ENCODE measurements at regions of chr16 and their contacts with region 1.

Region 1: GRCh38 chr16:54286090-54286993 is at the start of gene IRX3:
- DNase-seq: peak; percentile 89 to 92
- ATAC-seq: peak; percentile 76 to 84 (median 80)
- H3K4me3 ChIP-seq: peak within 1 kb of the TSS; percentile 61 to 93 (median 73)
- H3K27ac ChIP-seq: peak within 1 kb of the TSS; percentile 84 to 98 (median 94)
- H3K4me1 ChIP-seq: peaks cover 0 to 54% (median 23%) of the 10 kb centered on the region in 9 donors
- H3K27me3 ChIP-seq: peaks cover 0 to 100% (median 48%) of the 10 kb centered on the region in 7 donors
- CTCF ChIP-seq: no peak
- total RNA-seq, gene IRX3: 24.7 to 85.7 (median 69.7) TPM

Region 2: GRCh38 chr16:53892155-53892554 is 394.2 kb before region 1 on chr16:
- intact Hi-C with region 1: loop called in 3 of 10 experiments (anchors 5 to 10 kb)
- DNase-seq: peak in 1 of 2 donors; percentile 55
- ATAC-seq: peak in 7 of 8 donors; percentile 58 to 84 (median 69)
- H3K4me3 ChIP-seq: no peak overlapping the region
- H3K27ac ChIP-seq: no peak overlapping the region
- H3K4me1 ChIP-seq: peaks cover 4 to 43% (median 31%) of the 10 kb centered on the region in 9 donors
- H3K27me3 ChIP-seq: no peaks in the 10 kb centered on the region
- CTCF ChIP-seq: peak; percentile 50 to 84 (median 75)

Region 3: DNA sequence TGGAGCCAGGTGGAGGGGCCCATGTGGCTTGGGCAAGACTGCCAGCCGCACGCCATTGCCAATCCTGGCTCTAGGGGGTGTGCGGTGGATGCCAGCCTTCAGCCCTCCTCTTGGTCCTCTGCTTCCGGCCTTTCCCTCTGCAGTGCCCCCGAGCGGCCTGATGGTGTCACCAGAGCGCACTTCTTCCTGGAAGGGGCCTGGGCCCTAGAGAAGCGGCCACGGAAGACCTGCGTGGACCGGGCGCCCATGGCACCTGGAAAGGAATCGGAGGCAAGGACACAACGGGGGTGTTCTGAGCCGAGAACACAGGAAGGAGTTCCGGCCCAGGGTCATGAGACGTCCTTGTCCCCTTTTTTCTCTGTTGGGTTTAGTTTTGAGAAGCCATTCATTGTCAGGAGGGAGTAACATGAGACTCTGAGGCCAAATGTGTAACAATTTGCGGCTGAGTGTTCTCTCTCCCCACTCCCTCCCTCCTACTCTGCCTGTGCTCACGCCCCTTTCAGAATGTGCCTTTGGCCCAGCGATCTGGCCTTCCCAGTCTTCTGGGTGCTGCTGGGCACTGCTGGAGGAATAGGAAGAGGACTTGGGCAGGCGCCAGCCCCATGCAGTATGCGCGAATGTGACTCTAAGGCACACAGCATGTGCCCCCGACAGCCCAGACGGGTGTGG is 92.5 kb before region 1 on chr16:
- intact Hi-C with region 1: loop called in 6 of 10 experiments (anchors 1 to 10 kb)
- DNase-seq: peak; percentile 82 to 85
- ATAC-seq: peak; percentile 82 to 94 (median 90)
- H3K4me3 ChIP-seq: peak overlapping the region in 8 of 10 donors; percentile 10 to 47 (median 34)
- H3K27ac ChIP-seq: peak overlapping the region; percentile 76 to 91 (median 86)
- H3K4me1 ChIP-seq: peaks cover 0 to 25% (median 13%) of the 10 kb centered on the region in 9 donors
- H3K27me3 ChIP-seq: peaks cover 0 to 2% (median 0%) of the 10 kb centered on the region in 7 donors
- CTCF ChIP-seq: peak; percentile 78 to 93 (median 87)

Region 4: DNA sequence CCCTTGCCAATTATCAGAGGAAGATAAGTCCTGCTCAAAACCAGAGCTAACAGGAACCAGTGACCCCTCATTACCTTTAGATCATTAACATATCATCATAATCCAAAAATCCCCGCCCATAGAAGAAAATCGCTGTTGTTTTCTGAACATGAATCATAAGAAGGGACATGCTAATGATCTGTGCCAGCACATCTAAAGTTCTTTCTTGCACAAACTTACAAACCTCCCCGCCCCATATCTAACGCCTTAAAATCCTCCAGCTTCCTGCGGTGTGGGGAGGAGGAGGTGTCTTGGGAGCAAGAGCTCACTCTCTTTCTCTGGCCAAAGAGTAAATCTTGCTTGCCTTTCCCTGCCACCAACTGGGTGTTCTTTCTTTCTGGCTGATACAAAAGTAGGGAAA is 78.1 kb before region 1 on chr16:
- intact Hi-C with region 1: no loop called
- DNase-seq: no peak
- ATAC-seq: peak in 3 of 8 donors; percentile 43 to 67 (median 49)
- H3K4me3 ChIP-seq: no peak overlapping the region
- H3K27ac ChIP-seq: no peak overlapping the region
- H3K4me1 ChIP-seq: peaks cover 0 to 6% (median 0%) of the 10 kb centered on the region in 9 donors
- H3K27me3 ChIP-seq: peaks cover 0 to 3% (median 0%) of the 10 kb centered on the region in 7 donors
- CTCF ChIP-seq: no peak

Region 5: GRCh38 chr16:54489225-54490111 is 203.1 kb after region 1 on chr16:
- intact Hi-C with region 1: loop called in 3 of 10 experiments (anchors 5 to 10 kb)
- DNase-seq: no peak
- ATAC-seq: peak in 5 of 8 donors; percentile 29 to 74 (median 61)
- H3K4me3 ChIP-seq: no peak overlapping the region
- H3K27ac ChIP-seq: peak overlapping the region in 8 of 10 donors; percentile 29 to 69 (median 52)
- H3K4me1 ChIP-seq: peaks cover 6 to 48% (median 24%) of the 10 kb centered on the region in 9 donors
- H3K27me3 ChIP-seq: no peaks in the 10 kb centered on the region
- CTCF ChIP-seq: no peak

Region 6: GRCh38 chr16:54657058-54657708 is 370.8 kb after region 1 on chr16:
- intact Hi-C with region 1: loop called in 2 of 10 experiments (anchors 10 kb)
- DNase-seq: no peak
- ATAC-seq: peak in 4 of 8 donors; percentile 22 to 88 (median 48)
- H3K4me3 ChIP-seq: no peak overlapping the region
- H3K27ac ChIP-seq: no peak overlapping the region
- H3K4me1 ChIP-seq: peaks cover 10 to 37% (median 28%) of the 10 kb centered on the region in 9 donors
- H3K27me3 ChIP-seq: peaks cover 0 to 9% (median 0%) of the 10 kb centered on the region in 7 donors
- CTCF ChIP-seq: no peak

Region 7: GRCh38 chr16:54929090-54930004 is 643.0 kb after region 1 on chr16:
- intact Hi-C with region 1: loop called in 8 of 10 experiments (anchors 2 to 10 kb)
- DNase-seq: peak; percentile 100
- ATAC-seq: peak; percentile 92 to 96 (median 95)
- H3K4me3 ChIP-seq: peak overlapping the region; percentile 58 to 90 (median 74)
- H3K27ac ChIP-seq: peak overlapping the region; percentile 74 to 96 (median 88)
- H3K4me1 ChIP-seq: peaks cover 0 to 39% (median 25%) of the 10 kb centered on the region in 9 donors
- H3K27me3 ChIP-seq: peaks cover 0 to 93% (median 36%) of the 10 kb centered on the region in 7 donors
- CTCF ChIP-seq: peak in 5 of 9 donors; percentile 10 to 48 (median 41)

Measured in heart right ventricle (tissue), 16 donors.